Endothelial cell of umbilical vein (primary cell): ENCODE measurements at regions of chr10 and their contacts with region 1.

Region 1: GRCh38 chr10:3805791-3806461 is 20.9 kb upstream of the KLF6 start:
- DNase-seq: peak; percentile 96
- H3K4me3 ChIP-seq: peak overlapping the region in 1 of 3 experiments; percentile 31
- H3K27ac ChIP-seq: peak overlapping the region; percentile 100
- H3K4me1 ChIP-seq: peaks cover 70% of the 10 kb centered on the region
- H3K27me3 ChIP-seq: no peaks in the 10 kb centered on the region
- CTCF ChIP-seq: no peak
- POLR2A ChIP-seq: peak; percentile 29

Region 2: GRCh38 chr10:3347413-3348182 is 458.3 kb before region 1 on chr10:
- CTCF ChIA-PET with region 1: no interaction called
- POLR2A ChIA-PET with region 1: no interaction called
- dilution Hi-C with region 1: no loop called
- intact Hi-C with region 1: no loop called
- DNase-seq: no peak
- H3K4me3 ChIP-seq: no peak overlapping the region
- H3K27ac ChIP-seq: no peak overlapping the region
- H3K4me1 ChIP-seq: no peaks in the 10 kb centered on the region
- H3K27me3 ChIP-seq: peaks cover 3 to 8% of the 10 kb centered on the region in 2 experiments
- CTCF ChIP-seq: no peak
- POLR2A ChIP-seq: no peak

Region 3: DNA sequence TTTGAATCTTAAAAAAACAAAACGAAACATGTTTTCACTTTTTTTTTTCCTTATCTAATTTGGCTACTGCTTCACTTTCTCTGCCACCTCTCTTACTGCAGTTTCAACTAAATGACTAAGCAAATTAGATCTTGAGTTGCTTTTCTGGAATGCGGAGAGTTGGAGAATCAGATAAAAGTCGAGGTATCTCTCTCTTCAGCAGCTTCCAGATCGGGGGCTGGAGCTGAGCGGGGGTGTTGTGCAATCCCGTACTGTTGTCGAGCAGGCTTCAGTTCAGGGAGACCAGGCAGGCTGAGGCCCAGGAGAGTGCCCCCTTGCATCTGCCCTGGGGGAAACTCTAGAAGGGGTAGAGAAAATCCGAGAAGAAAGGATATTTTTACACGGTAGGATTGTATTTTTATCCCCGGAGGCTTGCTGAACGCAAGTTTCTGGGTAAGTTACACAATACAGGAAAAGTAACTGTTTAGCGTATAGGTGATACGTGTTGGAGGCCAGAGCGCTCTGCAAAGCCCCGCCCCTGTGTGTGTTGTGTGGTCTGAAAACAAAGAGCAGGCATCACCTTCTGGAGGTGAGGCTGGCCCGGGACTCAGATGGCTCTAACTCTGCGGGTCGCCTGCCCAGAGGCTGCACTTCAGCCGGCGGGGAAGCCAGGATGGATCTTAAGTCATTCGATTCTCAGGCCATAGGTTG is 137.5 kb before region 1 on chr10:
- CTCF ChIA-PET with region 1: no interaction called
- POLR2A ChIA-PET with region 1: no interaction called
- dilution Hi-C with region 1: no loop called
- intact Hi-C with region 1: no loop called
- DNase-seq: no peak
- H3K4me3 ChIP-seq: no peak overlapping the region
- H3K27ac ChIP-seq: no peak overlapping the region
- H3K4me1 ChIP-seq: no peaks in the 10 kb centered on the region
- H3K27me3 ChIP-seq: no peaks in the 10 kb centered on the region
- CTCF ChIP-seq: no peak
- POLR2A ChIP-seq: no peak

Region 4: DNA sequence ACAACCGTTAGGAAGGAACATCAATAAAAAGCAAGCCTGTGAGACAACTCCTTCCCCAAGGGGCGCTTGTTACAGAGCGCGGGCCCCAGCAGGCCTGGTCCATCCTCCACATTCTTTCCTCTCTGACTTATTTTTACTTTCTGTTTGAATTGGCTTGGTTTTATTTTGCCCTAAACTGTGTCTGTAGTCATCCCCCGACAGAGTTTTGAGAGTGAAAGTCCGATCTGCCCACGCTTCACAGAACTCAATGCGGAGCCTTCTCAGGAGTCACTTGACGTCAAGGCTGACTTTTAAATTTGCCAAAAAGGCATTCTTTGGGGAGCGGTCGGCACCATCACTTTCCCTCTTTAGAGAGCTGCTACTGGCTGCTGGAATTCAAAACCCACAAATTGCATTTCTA is 129.2 kb after region 1 on chr10:
- CTCF ChIA-PET with region 1: no interaction called
- POLR2A ChIA-PET with region 1: no interaction called
- dilution Hi-C with region 1: no loop called
- intact Hi-C with region 1: loop called (anchors 2 kb)
- DNase-seq: peak; percentile 26
- H3K4me3 ChIP-seq: no peak overlapping the region
- H3K27ac ChIP-seq: peak overlapping the region; percentile 75
- H3K4me1 ChIP-seq: peaks cover 24% of the 10 kb centered on the region
- H3K27me3 ChIP-seq: no peaks in the 10 kb centered on the region
- CTCF ChIP-seq: no peak
- POLR2A ChIP-seq: no peak

Region 5: DNA sequence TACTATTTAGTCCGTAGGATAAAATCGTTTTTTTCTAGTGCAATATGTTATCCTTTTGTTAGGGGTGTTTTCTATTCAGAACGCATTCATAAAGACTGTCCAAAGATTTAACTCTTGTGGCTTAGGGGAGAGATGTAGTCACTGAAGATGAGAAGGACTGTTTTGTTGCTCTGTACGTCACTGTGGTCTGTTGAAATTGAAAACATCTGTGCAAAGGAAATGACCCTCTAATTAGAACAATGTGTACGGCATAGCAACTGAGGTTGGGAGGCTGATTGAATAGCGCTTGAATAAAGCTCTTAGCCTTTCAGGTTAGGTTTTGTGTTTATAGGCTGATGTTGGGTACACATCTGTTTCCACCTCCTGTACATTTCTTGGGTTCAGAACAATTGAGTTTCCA is 566.7 kb after region 1 on chr10:
- CTCF ChIA-PET with region 1: no interaction called
- POLR2A ChIA-PET with region 1: no interaction called
- dilution Hi-C with region 1: no loop called
- intact Hi-C with region 1: loop called (anchors 1 kb)
- DNase-seq: peak; percentile 93
- H3K4me3 ChIP-seq: no peak overlapping the region
- H3K27ac ChIP-seq: peak overlapping the region; percentile 91
- H3K4me1 ChIP-seq: peaks cover 14% of the 10 kb centered on the region
- H3K27me3 ChIP-seq: no peaks in the 10 kb centered on the region
- CTCF ChIP-seq: no peak
- POLR2A ChIP-seq: no peak

Region 6: GRCh38 chr10:4663162-4663904 is 857.4 kb after region 1 on chr10:
- CTCF ChIA-PET with region 1: no interaction called
- POLR2A ChIA-PET with region 1: no interaction called
- dilution Hi-C with region 1: no loop called
- intact Hi-C with region 1: loop called (anchors 2 kb)
- DNase-seq: peak; percentile 97
- H3K4me3 ChIP-seq: no peak overlapping the region
- H3K27ac ChIP-seq: peak overlapping the region; percentile 97
- H3K4me1 ChIP-seq: peaks cover 23% of the 10 kb centered on the region
- H3K27me3 ChIP-seq: no peaks in the 10 kb centered on the region
- CTCF ChIP-seq: no peak
- POLR2A ChIP-seq: peak; percentile 65